GM10248 (cell line): ENCODE measurements at regions of chr3 and their contacts with region 1.

Region 1: DNA sequence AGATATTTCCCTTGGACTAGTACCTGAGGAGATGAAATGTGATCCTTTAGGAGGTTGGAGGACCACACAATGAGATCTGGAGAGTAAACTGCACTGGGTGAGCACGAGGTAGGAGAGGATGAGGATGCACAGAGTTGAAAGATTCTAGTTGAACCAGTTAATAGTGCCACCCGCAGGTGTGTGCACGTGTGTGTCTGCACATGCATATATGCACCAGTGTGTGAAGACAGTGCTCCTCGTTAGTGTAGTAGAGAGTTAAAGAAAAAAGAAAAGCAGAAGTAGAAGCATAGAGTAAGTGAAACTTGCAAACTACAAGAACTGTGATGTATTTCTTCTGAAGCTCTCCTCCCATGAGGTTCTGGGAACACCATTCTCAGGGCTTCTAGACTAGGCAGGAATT is 8.4 kb downstream of the MED12L start:
- DNase-seq: peak; percentile 15
- CTCF ChIP-seq: no peak

Region 2: GRCh38 chr3:151082880-151083733 is 10.8 kb before region 1 on chr3:
- CTCF ChIA-PET with region 1: interaction called, 11 read pairs
- POLR2A ChIA-PET with region 1: no interaction called
- DNase-seq: no peak
- CTCF ChIP-seq: no peak